Left colon (tissue), 2 donors: ENCODE measurements at regions of chr12 and their contacts with region 1.

Region 1: GRCh38 chr12:69570545-69571399 is 14.5 kb upstream of the CCT2 start:
- DNase-seq: peak in 1 of 2 donors; percentile 55
- ATAC-seq: peak; percentile 76

Region 2: DNA sequence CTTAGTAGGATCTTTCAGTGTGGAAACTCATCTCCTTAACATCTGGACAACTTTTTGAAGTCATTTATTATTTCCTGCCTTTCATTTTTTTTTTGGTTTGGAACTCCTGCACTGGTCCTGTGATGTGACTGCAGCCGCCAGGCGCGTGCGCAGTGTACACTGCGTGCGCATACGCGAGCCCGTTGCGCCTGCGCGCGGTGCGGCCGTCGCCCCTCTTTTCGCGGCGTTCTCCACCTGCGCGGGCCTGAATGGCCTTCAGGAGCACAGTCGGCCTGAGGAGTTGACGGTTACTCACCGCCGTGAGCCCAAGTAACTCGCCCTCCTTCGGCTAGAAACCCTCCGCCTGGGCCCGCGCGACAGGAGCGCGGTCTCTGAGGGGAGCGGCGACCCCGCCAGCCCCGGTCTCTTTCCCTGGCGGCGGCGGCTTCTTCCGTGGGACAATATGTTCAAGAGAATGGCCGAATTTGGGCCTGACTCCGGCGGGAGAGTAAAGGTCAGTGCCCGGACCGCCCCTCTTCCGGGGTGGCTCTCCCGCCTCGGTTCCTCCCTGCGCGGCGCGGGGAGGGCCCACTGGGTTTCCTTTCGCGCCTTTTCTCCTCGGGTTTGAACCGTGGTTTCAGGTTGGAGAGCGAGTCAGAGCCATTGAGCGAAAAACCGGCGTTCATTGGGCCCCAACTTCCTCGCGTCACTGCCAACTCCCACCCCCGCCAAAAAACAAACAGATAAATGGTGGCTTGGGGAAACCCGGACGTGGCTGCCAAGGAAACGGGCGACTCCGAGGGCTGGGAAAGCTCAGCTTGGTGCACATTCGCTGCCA is 211.0 kb before region 1 on chr12 and contains the start of gene YEATS4:
- intact Hi-C with region 1: loop called in 1 of 2 experiments (anchors 10 kb)
- DNase-seq: peak; percentile 88
- ATAC-seq: peak; percentile 86
- total RNA-seq, gene YEATS4: 7.3 to 11.6 TPM

Region 3: GRCh38 chr12:69470189-69471075 is 100.3 kb before region 1 on chr12 and contains the start of gene FRS2:
- intact Hi-C with region 1: loop called in 1 of 2 experiments (anchors 5 kb)
- DNase-seq: peak; percentile 91 to 93
- ATAC-seq: peak; percentile 100
- total RNA-seq, gene FRS2: 25.8 TPM

Region 4: GRCh38 chr12:69676257-69677012 is 105.7 kb after region 1 on chr12:
- intact Hi-C with region 1: no loop called
- DNase-seq: no peak
- ATAC-seq: no peak